Endothelial cell of umbilical vein (primary cell): ENCODE measurements at regions of chr1 and their contacts with region 1.

Region 1: GRCh38 chr1:67500413-67500959 is 70.3 kb upstream of the SERBP1 start:
- DNase-seq: peak; percentile 77
- H3K4me3 ChIP-seq: no peak overlapping the region
- H3K27ac ChIP-seq: no peak overlapping the region
- H3K4me1 ChIP-seq: no peaks in the 10 kb centered on the region
- H3K27me3 ChIP-seq: peaks cover 6 to 14% of the 10 kb centered on the region in 2 experiments
- CTCF ChIP-seq: peak; percentile 97 to 98
- POLR2A ChIP-seq: no peak

Region 2: GRCh38 chr1:66764994-66765578 is 735.4 kb before region 1 on chr1:
- CTCF ChIA-PET with region 1: interaction called, 3 read pairs
- POLR2A ChIA-PET with region 1: no interaction called
- dilution Hi-C with region 1: no loop called
- intact Hi-C with region 1: loop called (anchors 10 kb)
- DNase-seq: peak; percentile 79
- H3K4me3 ChIP-seq: no peak overlapping the region
- H3K27ac ChIP-seq: no peak overlapping the region
- H3K4me1 ChIP-seq: no peaks in the 10 kb centered on the region
- H3K27me3 ChIP-seq: no peaks in the 10 kb centered on the region
- CTCF ChIP-seq: peak; percentile 48 to 54
- POLR2A ChIP-seq: no peak

Region 3: GRCh38 chr1:67239738-67240137 is 260.7 kb before region 1 on chr1:
- CTCF ChIA-PET with region 1: interaction called, 79 read pairs
- POLR2A ChIA-PET with region 1: no interaction called
- dilution Hi-C with region 1: no loop called
- intact Hi-C with region 1: loop called (anchors 1 kb)
- DNase-seq: no peak
- H3K4me3 ChIP-seq: no peak overlapping the region
- H3K27ac ChIP-seq: no peak overlapping the region
- H3K4me1 ChIP-seq: no peaks in the 10 kb centered on the region
- H3K27me3 ChIP-seq: peaks cover 12 to 15% of the 10 kb centered on the region in 2 experiments
- CTCF ChIP-seq: no peak
- POLR2A ChIP-seq: no peak

Region 4: GRCh38 chr1:67355745-67356424 is 144.6 kb before region 1 on chr1:
- CTCF ChIA-PET with region 1: interaction called, 15 read pairs
- POLR2A ChIA-PET with region 1: no interaction called
- dilution Hi-C with region 1: no loop called
- intact Hi-C with region 1: no loop called
- DNase-seq: no peak
- H3K4me3 ChIP-seq: no peak overlapping the region
- H3K27ac ChIP-seq: no peak overlapping the region
- H3K4me1 ChIP-seq: no peaks in the 10 kb centered on the region
- H3K27me3 ChIP-seq: no peaks in the 10 kb centered on the region
- CTCF ChIP-seq: no peak
- POLR2A ChIP-seq: no peak

Region 5: GRCh38 chr1:67489643-67490042 is 10.8 kb before region 1 on chr1:
- CTCF ChIA-PET with region 1: interaction called, 38 read pairs
- POLR2A ChIA-PET with region 1: no interaction called
- dilution Hi-C with region 1: no loop called
- intact Hi-C with region 1: no loop called
- DNase-seq: peak; percentile 58
- H3K4me3 ChIP-seq: no peak overlapping the region
- H3K27ac ChIP-seq: no peak overlapping the region
- H3K4me1 ChIP-seq: no peaks in the 10 kb centered on the region
- H3K27me3 ChIP-seq: no peaks in the 10 kb centered on the region
- CTCF ChIP-seq: peak; percentile 24 to 44
- POLR2A ChIP-seq: no peak

Region 6: DNA sequence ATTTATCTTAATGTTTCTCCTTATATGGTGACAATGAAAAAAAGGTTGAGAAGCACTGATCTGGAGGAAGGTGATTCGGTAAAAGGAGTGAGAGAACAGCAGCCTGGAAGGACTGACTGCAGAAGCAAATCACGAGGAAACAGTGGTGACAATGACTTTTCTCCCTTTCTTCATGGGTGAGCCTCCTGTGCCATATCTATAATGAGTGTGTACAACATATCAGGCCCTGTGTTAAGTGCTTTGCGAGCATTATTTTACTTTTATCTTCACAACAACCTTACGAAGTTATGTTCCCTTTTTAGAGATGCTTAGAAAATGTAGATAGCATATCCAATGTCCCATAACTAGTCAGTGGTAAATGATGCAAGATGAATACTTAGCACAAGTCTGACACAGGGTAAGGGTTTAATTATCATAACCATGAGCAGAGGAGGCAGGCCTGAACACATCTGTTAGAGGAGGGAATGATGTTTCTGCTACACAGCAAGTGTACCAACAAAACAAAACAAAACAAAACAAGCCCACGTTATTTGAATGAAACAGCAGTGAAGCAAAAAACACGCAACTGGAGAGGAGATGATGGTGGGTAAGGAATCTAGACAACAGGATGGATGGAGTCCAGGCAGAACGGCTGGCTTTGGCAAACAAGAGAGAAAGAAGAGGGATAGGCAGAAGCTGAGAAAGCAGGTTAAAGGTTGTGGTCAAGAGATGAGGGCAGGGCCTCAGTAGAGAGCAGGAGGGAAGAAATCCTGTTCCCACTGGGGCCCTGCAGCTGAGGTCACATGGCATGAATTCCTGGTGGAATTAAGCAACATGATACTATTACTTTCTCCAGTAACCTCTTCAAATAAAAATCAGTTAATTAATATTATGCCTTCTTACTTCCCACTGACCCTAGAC is 303.1 kb after region 1 on chr1:
- CTCF ChIA-PET with region 1: no interaction called
- POLR2A ChIA-PET with region 1: no interaction called
- dilution Hi-C with region 1: no loop called
- intact Hi-C with region 1: no loop called
- DNase-seq: no peak
- H3K4me3 ChIP-seq: no peak overlapping the region
- H3K27ac ChIP-seq: no peak overlapping the region
- H3K4me1 ChIP-seq: no peaks in the 10 kb centered on the region
- H3K27me3 ChIP-seq: no peaks in the 10 kb centered on the region
- CTCF ChIP-seq: no peak
- POLR2A ChIP-seq: no peak